GM10248 (cell line): ENCODE measurements at regions of chr1 and their contacts with region 1.

Region 1: DNA sequence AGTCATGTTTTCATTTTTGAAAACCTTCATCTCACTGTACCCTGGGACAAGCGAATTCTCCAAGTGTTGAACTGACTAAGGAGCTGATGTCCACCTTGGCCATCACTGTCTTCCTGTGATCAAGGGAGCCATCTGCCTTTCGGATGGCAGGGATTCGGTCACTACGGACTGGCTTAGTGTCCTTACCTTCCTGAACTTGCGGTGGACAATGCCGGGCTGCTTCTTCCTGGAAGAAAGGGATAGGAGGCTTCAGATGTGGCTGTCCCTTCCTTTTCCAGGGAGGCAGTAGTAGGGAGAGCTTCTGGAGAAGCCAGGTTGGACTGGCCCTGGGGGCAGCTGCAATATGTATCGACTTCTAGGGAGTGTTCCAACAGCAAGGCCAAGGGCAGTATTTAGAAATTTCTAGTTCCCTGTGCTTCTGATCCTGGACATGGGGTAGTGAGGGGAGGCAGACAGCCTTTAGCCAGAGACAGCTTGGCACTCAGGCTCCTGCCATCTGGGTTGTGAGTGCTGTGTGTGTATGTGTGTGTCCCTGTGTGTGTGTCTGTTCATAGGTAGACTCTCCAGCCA is 114.6 kb downstream of the IER5 start:
- DNase-seq: no peak
- CTCF ChIP-seq: no peak

Region 2: DNA sequence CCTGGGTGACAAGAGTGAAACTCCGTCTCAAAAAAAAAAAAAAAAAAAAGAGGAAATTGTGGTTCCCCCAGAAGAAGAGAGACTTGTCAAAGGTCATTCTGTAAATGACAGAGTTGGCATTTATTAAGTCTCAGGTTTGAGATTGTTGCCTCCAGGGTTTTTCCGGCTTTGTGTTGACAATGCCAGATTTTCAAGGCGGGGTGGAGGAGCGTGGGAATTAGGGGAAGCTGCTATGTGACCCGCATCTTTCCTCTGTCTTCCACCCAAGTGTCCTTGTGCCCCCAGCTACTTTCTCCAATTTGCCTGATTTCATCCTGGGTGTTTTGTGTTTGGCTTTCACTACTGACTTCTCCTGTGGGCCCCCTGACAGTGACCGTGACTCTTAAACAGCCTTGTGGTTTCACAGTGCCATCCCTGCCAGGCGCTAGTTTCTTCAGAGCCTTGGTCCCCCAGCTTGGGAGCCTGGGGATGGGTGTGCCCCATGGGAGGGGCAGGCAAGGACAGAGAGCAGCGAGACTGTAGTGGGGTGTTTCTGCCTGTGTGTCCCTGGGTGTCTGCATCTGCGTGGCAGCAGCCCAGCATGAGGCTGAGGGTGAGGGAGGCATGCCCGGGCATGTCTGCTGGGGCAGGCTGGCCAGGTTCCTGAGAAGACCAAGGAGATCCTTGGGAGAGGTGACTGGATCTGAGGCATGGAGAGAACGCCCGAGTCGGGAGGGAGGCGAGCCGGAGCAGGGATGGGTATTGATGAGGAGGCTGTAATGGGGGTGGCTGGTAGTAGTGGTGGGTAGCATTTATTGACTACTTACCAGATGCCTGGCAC is 68.3 kb before region 1 on chr1:
- CTCF ChIA-PET with region 1: no interaction called
- POLR2A ChIA-PET with region 1: no interaction called
- DNase-seq: peak; percentile 73
- CTCF ChIP-seq: no peak

Region 3: GRCh38 chr1:181189691-181190363 is 13.2 kb before region 1 on chr1:
- CTCF ChIA-PET with region 1: interaction called, 12 read pairs
- POLR2A ChIA-PET with region 1: no interaction called
- DNase-seq: peak; percentile 91
- CTCF ChIP-seq: peak; percentile 99

Region 4: GRCh38 chr1:181685216-181685615 is 482.1 kb after region 1 on chr1:
- CTCF ChIA-PET with region 1: no interaction called
- POLR2A ChIA-PET with region 1: no interaction called
- DNase-seq: no peak
- CTCF ChIP-seq: no peak